Lower leg skin (tissue), 4 donors: ENCODE measurements at regions of chr12 and their contacts with region 1.

Region 1: DNA sequence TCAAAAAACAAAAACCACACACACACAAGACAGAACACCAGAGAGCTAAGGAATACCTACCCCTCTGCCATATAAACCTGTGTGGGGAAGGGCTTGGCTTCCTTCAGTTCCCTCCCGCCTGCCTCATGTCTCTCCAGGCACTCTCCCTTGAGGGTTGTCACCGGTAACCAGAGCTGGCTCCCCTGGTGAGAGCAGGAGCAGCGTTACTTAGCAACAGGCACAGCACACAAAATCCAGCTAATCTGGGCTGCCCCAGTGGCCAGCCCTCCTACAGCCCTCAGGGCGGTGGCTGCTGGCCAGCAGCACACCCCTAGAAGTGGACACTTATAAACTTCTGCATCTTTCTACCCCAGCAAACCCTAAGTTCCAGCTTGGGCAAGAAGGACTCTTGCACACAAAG is 21.6 kb upstream of the NR4A1 start:
- DNase-seq: no peak
- H3K4me3 ChIP-seq: no peak overlapping the region
- CTCF ChIP-seq: no peak
- POLR2A ChIP-seq: no peak

Region 2: GRCh38 chr12:52082988-52083637 is 53.4 kb after region 1 on chr12:
- intact Hi-C with region 1: loop called (anchors 5 kb)
- DNase-seq: no peak
- H3K4me3 ChIP-seq: no peak overlapping the region
- CTCF ChIP-seq: peak in 2 of 3 donors; percentile 82 to 94
- POLR2A ChIP-seq: no peak

Region 3: GRCh38 chr12:52121824-52122539 is 92.3 kb after region 1 on chr12:
- intact Hi-C with region 1: loop called (anchors 2 kb)
- DNase-seq: peak in 1 of 2 donors; percentile 92
- H3K4me3 ChIP-seq: no peak overlapping the region
- CTCF ChIP-seq: no peak
- POLR2A ChIP-seq: no peak